Kidney (tissue), 22 donors: ENCODE measurements at regions of chr16 and their contacts with region 1.

Region 1: GRCh38 chr16:31899505-31899904 is 25.9 kb downstream of the ZNF267 start:
- DNase-seq: no peak
- H3K4me3 ChIP-seq: no peak overlapping the region
- H3K27ac ChIP-seq: no peak overlapping the region
- H3K4me1 ChIP-seq: no peaks in the 10 kb centered on the region
- H3K27me3 ChIP-seq: no peaks in the 10 kb centered on the region
- CTCF ChIP-seq: no peak

Region 2: GRCh38 chr16:30526137-30526822 is 1373.2 kb before region 1 on chr16 and contains the start of gene ZNF768:
- intact Hi-C with region 1: no loop called
- DNase-seq: peak; percentile 45 to 94 (median 65)
- H3K4me3 ChIP-seq: peak within 1 kb of the TSS; percentile 63 to 78 (median 67)
- H3K27ac ChIP-seq: peak within 1 kb of the TSS; percentile 99 to 100
- H3K4me1 ChIP-seq: peaks cover 4 to 22% (median 18%) of the 10 kb centered on the region in 3 donors
- H3K27me3 ChIP-seq: no peaks in the 10 kb centered on the region
- CTCF ChIP-seq: no peak
- total RNA-seq, gene ZNF768: 36.2 TPM

Region 3: GRCh38 chr16:31577411-31577810 is 322.1 kb before region 1 on chr16:
- intact Hi-C with region 1: no loop called
- DNase-seq: no peak
- H3K4me3 ChIP-seq: no peak overlapping the region
- H3K27ac ChIP-seq: no peak overlapping the region
- H3K4me1 ChIP-seq: no peaks in the 10 kb centered on the region
- H3K27me3 ChIP-seq: no peaks in the 10 kb centered on the region
- CTCF ChIP-seq: no peak

Region 4: GRCh38 chr16:31754998-31755615 is 144.4 kb before region 1 on chr16:
- intact Hi-C with region 1: loop called (anchors 10 kb)
- DNase-seq: no peak
- H3K4me3 ChIP-seq: peak overlapping the region in 1 of 3 donors; percentile 26
- H3K27ac ChIP-seq: no peak overlapping the region
- H3K4me1 ChIP-seq: no peaks in the 10 kb centered on the region
- H3K27me3 ChIP-seq: no peaks in the 10 kb centered on the region
- CTCF ChIP-seq: no peak